ENCODE measurements at regions of chr22 and their contacts with region 1.

Region 1: DNA sequence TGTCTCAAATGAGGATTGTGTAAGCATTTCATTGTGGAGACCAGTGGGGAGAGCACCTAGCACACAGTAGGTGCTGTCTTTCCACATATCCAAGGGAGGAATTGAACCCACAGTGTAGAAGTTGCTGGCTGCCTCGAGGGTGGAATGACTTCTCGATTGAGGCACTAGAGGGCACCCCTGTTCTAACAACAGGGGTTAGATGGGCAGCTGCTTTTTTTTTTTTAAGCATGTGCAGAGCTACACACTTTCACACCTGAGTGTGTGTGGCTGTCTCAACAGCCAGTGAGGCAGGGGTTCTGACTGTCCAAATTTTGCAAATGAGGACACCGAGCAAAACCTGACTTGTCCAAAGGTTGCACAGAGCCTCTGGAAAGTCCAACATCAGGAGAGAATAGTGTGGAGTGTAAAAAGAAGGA is 118.2 kb upstream of the CRYBB3 start:
- DNase-seq: peak; percentile 33 to 50 (median 42)
- ATAC-seq: peak; percentile 60; the same call in 2 of the 3 replicates
- H3K4me3 ChIP-seq: no peak overlapping the region
- H3K27ac ChIP-seq: no peak overlapping the region
- H3K4me1 ChIP-seq: no peaks in the 10 kb centered on the region
- H3K27me3 ChIP-seq: no peaks in the 10 kb centered on the region; a peak in 1 of 5 replicates
- CTCF ChIP-seq: peak; percentile 48 to 58 (median 52)
- EP300 ChIP-seq: no peak
- POLR2A ChIP-seq: no peak
- RAD21 ChIP-seq: peak in 1 of 2 experiments; percentile 34; a peak in 1 of 4 replicates

Region 2: GRCh38 chr22:25169278-25170031 is 88.0 kb after region 1 on chr22:
- CTCF ChIA-PET with region 1: no interaction called
- POLR2A ChIA-PET with region 1: no interaction called
- in situ Hi-C with region 1: no loop called
- intact Hi-C with region 1: loop called (anchors 5 kb)
- DNase-seq: no peak
- ATAC-seq: no peak
- H3K4me3 ChIP-seq: no peak overlapping the region
- H3K27ac ChIP-seq: no peak overlapping the region
- H3K4me1 ChIP-seq: no peaks in the 10 kb centered on the region
- H3K27me3 ChIP-seq: peaks cover 0 to 12% of the 10 kb centered on the region in 2 experiments; a peak in 4 of 5 replicates
- CTCF ChIP-seq: no peak
- EP300 ChIP-seq: no peak
- POLR2A ChIP-seq: no peak
- RAD21 ChIP-seq: no peak